Pancreas (tissue), 10 donors: ENCODE measurements at regions of chr2 and their contacts with region 1.

Region 1: GRCh38 chr2:221972813-221973463 is 325.9 kb downstream of the PAX3 start:
- DNase-seq: no peak
- ATAC-seq: no peak
- H3K4me3 ChIP-seq: no peak overlapping the region
- H3K27ac ChIP-seq: no peak overlapping the region
- H3K4me1 ChIP-seq: no peaks in the 10 kb centered on the region
- H3K27me3 ChIP-seq: no peaks in the 10 kb centered on the region
- CTCF ChIP-seq: no peak

Region 2: DNA sequence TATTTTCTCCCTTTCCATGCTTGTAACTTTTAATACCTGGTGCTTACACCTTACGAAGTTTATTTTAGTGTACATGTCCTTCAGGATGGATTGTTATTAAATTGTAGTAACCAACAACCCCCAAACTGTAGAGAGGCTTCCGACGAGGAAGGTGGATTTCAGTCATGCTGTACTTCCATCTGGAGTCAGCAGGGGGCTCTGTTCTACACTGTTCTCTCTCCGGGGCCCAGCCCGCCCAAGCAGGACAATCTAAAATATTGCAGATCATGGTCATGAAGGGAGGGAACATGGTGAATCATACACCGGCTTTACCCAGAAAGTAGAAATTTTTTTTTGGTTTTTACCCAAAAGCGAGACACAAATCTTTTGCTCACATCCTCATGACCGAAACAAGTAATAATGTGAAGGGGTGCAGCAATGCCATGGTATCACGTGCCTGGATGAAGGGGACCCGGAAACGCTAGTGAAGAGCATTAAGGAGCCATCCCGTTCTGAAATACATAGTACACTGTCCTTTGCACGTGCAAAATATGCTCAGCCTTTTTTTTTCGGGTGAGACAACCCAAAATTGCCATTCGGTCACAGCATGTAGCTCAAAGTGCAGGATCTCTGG is 1285.6 kb before region 1 on chr2:
- intact Hi-C with region 1: loop called in 1 of 3 experiments (anchors 10 kb)
- DNase-seq: peak; percentile 36 to 77 (median 60)
- ATAC-seq: peak; percentile 78 to 96 (median 90)
- H3K4me3 ChIP-seq: no peak overlapping the region
- H3K27ac ChIP-seq: no peak overlapping the region
- H3K4me1 ChIP-seq: no peaks in the 10 kb centered on the region
- H3K27me3 ChIP-seq: no peaks in the 10 kb centered on the region
- CTCF ChIP-seq: peak; percentile 64 to 82 (median 72)

Region 3: GRCh38 chr2:221896505-221897151 is 76.3 kb before region 1 on chr2:
- intact Hi-C with region 1: no loop called
- DNase-seq: no peak
- ATAC-seq: peak in 2 of 4 donors; percentile 30 to 66
- H3K4me3 ChIP-seq: no peak overlapping the region
- H3K27ac ChIP-seq: no peak overlapping the region
- H3K4me1 ChIP-seq: no peaks in the 10 kb centered on the region
- H3K27me3 ChIP-seq: no peaks in the 10 kb centered on the region
- CTCF ChIP-seq: no peak